ENCODE measurements at regions of chr4 and their contacts with region 1.

Region 1: GRCh38 chr4:5785806-5786680 is 75.0 kb downstream of the EVC start:
- DNase-seq: no peak
- ATAC-seq: no peak
- H3K4me3 ChIP-seq: no peak overlapping the region
- H3K27ac ChIP-seq: peak overlapping the region in 1 of 2 donors; percentile 58
- H3K4me1 ChIP-seq: no peaks in the 10 kb centered on the region
- H3K27me3 ChIP-seq: no peaks in the 10 kb centered on the region

Region 2: GRCh38 chr4:5693871-5694270 is 92.2 kb before region 1 on chr4:
- intact Hi-C with region 1: loop called in 1 of 2 experiments (anchors 5 kb)
- DNase-seq: no peak
- ATAC-seq: no peak
- H3K4me3 ChIP-seq: no peak overlapping the region
- H3K27ac ChIP-seq: no peak overlapping the region
- H3K4me1 ChIP-seq: no peaks in the 10 kb centered on the region
- H3K27me3 ChIP-seq: no peaks in the 10 kb centered on the region